Activated CD8-positive, alpha-beta T cell treated with anti-CD3 and anti-CD28 coated beads, Interleukin-2, amount 10 ng/mL, durations not matched to agents 7 days and 5 days (primary cell): ENCODE measurements at regions of chr10 and their contacts with region 1.

Region 1: DNA sequence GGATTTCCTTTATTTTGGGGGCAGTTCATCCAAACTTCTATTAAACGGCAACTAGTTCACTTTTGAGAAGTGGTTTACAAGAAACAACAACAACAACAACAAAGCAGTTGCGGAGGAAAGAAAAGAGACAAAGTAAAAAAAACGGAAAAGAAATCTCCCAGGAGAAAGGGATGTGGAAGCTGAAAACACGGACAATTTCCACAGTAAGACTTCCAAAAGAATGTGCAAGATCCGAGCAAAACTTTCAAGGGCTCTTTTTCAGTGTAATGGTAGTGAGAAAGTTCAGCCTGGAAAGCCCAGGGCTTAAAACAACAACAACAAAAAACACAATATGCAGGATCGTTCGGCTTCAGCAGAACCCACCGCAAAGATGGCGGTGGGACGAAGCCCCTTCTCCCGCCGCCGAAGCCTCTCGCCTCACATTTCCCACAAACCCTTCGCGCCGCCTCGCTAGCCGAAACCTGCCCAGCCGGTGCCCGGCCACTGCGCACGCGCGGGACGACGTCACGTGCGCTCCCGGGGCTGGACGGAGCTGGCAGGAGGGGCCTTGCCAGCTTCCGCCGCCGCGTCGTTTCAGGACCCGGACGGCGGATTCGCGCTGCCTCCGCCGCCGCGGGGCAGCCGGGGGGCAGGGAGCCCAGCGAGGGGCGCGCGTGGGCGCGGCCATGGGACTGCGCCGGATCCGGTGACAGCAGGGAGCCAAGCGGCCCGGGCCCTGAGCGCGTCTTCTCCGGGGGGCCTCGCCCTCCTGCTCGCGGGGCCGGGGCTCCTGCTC is at the start of gene TNKS2:
- DNase-seq: peak; percentile 93
- ATAC-seq: peak; percentile 87
- H3K4me3 Mint-ChIP-seq: peak within 1 kb of the TSS; percentile 97
- H3K27ac Mint-ChIP-seq: peak within 1 kb of the TSS; percentile 96
- H3K4me1 Mint-ChIP-seq: peaks cover 47% of the 10 kb centered on the region
- H3K27me3 Mint-ChIP-seq: no peaks in the 10 kb centered on the region
- total RNA-seq, gene TNKS2: 27.5 to 28.4 TPM

Region 2: GRCh38 chr10:91923371-91924211 is 125.5 kb after region 1 on chr10 and contains the start of gene BTAF1:
- CTCF ChIA-PET with region 1: interaction called, 3 read pairs
- POLR2A ChIA-PET with region 1: interaction called, 15 read pairs
- DNase-seq: peak; percentile 94
- ATAC-seq: peak; percentile 96
- H3K4me3 Mint-ChIP-seq: peak within 1 kb of the TSS; percentile 88
- H3K27ac Mint-ChIP-seq: peak within 1 kb of the TSS; percentile 99
- H3K4me1 Mint-ChIP-seq: peaks cover 35% of the 10 kb centered on the region
- H3K27me3 Mint-ChIP-seq: peaks cover 3% of the 10 kb centered on the region
- total RNA-seq, gene BTAF1: 40.9 to 41.0 TPM